Activated T-helper 2 cell treated with anti-CD3 and anti-CD28 coated beads, Interferon-gamma antibody, Interleukin-2, Interleukin-4, amounts not matched to agents 10 μg/mL and 5 μg/mL and 100 μg/mL, durations not matched to agents 14 hours and 24 hours and 36 hours (primary cell): ENCODE measurements at regions of chr16 and their contacts with region 1.

Region 1: GRCh38 chr16:87316923-87317749 is at the start of gene C16orf95:
- DNase-seq: peak; percentile 95
- H3K4me3 Mint-ChIP-seq: peak within 1 kb of the TSS; percentile 87
- H3K27ac Mint-ChIP-seq: peak within 1 kb of the TSS; percentile 97
- H3K4me1 Mint-ChIP-seq: peaks cover 12% of the 10 kb centered on the region
- H3K27me3 Mint-ChIP-seq: no peaks in the 10 kb centered on the region
- total RNA-seq, gene C16orf95: 12.3 and 12.4 TPM in 2 replicates

Region 2: DNA sequence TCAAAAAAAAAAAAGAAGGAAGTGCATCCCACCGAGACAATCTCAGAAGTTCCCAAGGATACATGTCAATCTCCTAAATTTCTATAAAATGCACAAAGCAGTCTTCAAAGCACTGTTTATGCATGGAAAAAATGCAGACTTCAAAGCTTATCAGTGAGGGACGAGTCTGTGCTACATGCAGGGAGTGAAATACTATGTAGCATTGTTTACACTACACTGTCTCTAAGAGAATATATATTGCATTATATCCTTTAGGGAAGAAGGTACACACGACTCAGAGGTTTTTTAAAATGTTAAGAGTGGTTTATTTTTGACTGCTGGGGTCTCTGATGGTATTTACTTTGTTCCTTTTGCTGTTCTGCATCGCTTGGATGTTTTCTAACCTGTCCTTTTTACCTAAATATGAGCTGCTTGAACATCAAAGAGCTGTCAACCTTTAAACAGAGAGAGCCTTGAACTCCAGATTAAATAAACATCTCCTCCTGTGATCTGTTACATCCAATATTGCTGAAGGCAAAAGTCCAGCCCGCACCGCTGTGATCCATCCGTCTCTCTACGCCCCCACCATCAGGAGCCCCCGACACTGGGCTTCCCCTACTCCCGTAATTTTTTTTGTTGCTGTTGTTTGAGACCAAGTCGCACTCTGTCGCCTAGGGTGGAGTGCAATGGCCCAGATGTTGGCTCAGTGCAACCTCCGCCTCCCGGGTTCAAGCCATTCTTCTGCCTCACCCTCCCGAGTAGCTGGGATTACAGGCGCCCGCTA is 65.1 kb after region 1 on chr16:
- intact Hi-C with region 1: loop called (anchors 1 kb)
- DNase-seq: no peak
- H3K4me3 Mint-ChIP-seq: peak overlapping the region; percentile 87
- H3K27ac Mint-ChIP-seq: peak overlapping the region; percentile 86
- H3K4me1 Mint-ChIP-seq: peaks cover 41% of the 10 kb centered on the region
- H3K27me3 Mint-ChIP-seq: no peaks in the 10 kb centered on the region

Region 3: DNA sequence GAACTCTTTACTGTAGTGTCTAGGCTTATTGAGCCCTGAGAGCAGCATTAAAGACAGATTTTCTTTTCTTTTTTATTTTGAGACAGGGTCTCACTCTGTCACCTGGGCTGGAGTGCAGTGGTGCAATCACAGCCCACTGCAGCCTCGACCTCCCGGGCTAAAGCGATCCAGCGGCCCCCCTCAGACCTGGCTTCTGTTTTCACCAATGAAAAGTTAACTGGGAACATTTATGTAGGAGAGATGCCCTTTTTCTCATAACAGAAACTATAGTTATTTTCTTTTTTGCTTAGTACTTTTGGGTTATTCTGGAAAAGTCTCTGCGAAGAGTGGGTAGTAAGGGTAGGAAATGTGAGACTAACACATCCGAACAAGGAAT is 76.5 kb after region 1 on chr16:
- intact Hi-C with region 1: loop called (anchors 1 kb)
- DNase-seq: no peak
- H3K4me3 Mint-ChIP-seq: peak overlapping the region; percentile 90
- H3K27ac Mint-ChIP-seq: peak overlapping the region; percentile 86
- H3K4me1 Mint-ChIP-seq: peaks cover 36% of the 10 kb centered on the region
- H3K27me3 Mint-ChIP-seq: no peaks in the 10 kb centered on the region

Region 4: GRCh38 chr16:87492721-87493607 is 175.8 kb after region 1 on chr16 and contains the start of gene ZCCHC14:
- intact Hi-C with region 1: loop called (anchors 10 kb)
- DNase-seq: peak; percentile 98
- H3K4me3 Mint-ChIP-seq: peak within 1 kb of the TSS; percentile 82
- H3K27ac Mint-ChIP-seq: peak within 1 kb of the TSS; percentile 68
- H3K4me1 Mint-ChIP-seq: peaks cover 41% of the 10 kb centered on the region
- H3K27me3 Mint-ChIP-seq: peaks cover 24% of the 10 kb centered on the region
- total RNA-seq, gene ZCCHC14: 7.4 and 8.0 TPM in 2 replicates